Sigmoid colon (tissue), 7 donors: ENCODE measurements at regions of chr20 and their contacts with region 1.

Region 1: DNA sequence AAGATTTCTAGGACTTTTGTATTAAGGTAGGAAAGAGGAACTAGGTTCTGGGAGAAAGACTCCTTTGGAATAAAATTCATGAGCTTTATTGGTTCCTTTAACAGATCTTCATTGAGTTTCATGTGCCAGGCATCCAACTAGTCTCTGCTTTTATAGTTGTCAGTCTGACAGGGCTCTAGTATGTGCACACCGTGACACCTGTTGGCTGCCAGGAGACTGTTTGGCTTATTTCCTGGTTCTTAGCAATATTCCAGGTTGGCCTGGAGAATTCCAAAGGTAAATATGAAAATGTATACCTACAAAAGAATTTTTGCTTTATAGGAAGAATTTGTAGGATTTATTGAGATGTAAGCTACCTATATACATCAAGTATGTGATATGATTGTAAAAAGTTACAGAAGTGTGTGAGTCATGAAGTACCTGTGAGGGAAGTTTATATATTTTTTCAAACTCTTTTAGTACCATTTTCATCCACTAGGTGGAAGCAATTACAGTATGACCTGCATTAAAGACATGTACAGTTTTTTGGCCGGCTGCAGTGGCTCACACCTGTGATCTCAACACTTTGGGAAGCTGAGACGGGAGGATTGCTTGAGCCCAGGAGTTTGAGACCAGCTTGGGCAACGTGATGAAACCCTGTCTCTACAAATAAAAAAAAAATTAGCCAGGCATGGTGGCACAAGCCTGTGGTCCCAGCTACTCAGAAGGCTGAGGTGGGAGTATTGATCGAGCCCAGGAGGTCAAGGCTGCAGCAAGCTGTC is 35.2 kb downstream of the NDUFAF5 start:
- DNase-seq: peak; percentile 77
- H3K4me3 ChIP-seq: no peak overlapping the region
- H3K27ac ChIP-seq: no peak overlapping the region
- H3K4me1 ChIP-seq: peaks cover 0 to 4% (median 0%) of the 10 kb centered on the region in 4 donors
- H3K27me3 ChIP-seq: no peaks in the 10 kb centered on the region
- CTCF ChIP-seq: peak; percentile 70 to 73 (median 72)
- EP300 ChIP-seq: no peak
- POLR2A ChIP-seq: no peak

Region 2: DNA sequence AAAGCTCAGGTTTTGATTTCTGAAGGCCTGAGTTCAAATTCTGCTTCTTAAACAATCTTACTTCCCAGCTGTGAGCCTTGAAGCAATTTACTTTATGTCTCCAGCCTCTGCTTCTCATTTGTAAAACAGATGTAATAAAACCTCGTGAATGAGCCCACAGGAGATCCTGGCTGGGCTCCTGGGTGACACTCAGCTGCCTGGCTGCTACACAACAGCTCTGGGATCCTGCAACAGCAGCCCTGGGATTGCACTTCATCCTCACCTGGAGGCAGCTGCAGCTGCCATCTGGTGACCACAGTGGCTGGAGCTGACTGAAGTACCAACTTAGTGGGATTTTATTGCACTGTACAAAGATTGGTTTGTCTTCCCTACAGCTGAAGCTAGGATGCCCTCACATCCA is 63.4 kb after region 1 on chr20:
- intact Hi-C with region 1: loop called (anchors 5 kb)
- DNase-seq: peak; percentile 84
- H3K4me3 ChIP-seq: no peak overlapping the region
- H3K27ac ChIP-seq: peak overlapping the region in 3 of 4 donors; percentile 1 to 50 (median 17)
- H3K4me1 ChIP-seq: peaks cover 0 to 25% (median 21%) of the 10 kb centered on the region in 4 donors
- H3K27me3 ChIP-seq: no peaks in the 10 kb centered on the region
- CTCF ChIP-seq: peak in 1 of 4 experiments; percentile 30
- EP300 ChIP-seq: no peak
- POLR2A ChIP-seq: no peak

Region 3: GRCh38 chr20:13953227-13953626 is 133.2 kb after region 1 on chr20:
- intact Hi-C with region 1: loop called (anchors 2 kb)
- DNase-seq: no peak
- H3K4me3 ChIP-seq: no peak overlapping the region
- H3K27ac ChIP-seq: no peak overlapping the region
- H3K4me1 ChIP-seq: no peaks in the 10 kb centered on the region
- H3K27me3 ChIP-seq: no peaks in the 10 kb centered on the region
- CTCF ChIP-seq: no peak
- EP300 ChIP-seq: no peak
- POLR2A ChIP-seq: no peak

Region 4: GRCh38 chr20:14055127-14055742 is 235.2 kb after region 1 on chr20:
- intact Hi-C with region 1: loop called (anchors 1 kb)
- DNase-seq: no peak
- H3K4me3 ChIP-seq: no peak overlapping the region
- H3K27ac ChIP-seq: no peak overlapping the region
- H3K4me1 ChIP-seq: peaks cover 0 to 11% (median 5%) of the 10 kb centered on the region in 4 donors
- H3K27me3 ChIP-seq: no peaks in the 10 kb centered on the region
- CTCF ChIP-seq: peak; percentile 22 to 51 (median 45)
- EP300 ChIP-seq: no peak
- POLR2A ChIP-seq: no peak